CD4-positive, alpha-beta memory T cell (primary cell): ENCODE measurements at regions of chr13 and their contacts with region 1.

Region 1: DNA sequence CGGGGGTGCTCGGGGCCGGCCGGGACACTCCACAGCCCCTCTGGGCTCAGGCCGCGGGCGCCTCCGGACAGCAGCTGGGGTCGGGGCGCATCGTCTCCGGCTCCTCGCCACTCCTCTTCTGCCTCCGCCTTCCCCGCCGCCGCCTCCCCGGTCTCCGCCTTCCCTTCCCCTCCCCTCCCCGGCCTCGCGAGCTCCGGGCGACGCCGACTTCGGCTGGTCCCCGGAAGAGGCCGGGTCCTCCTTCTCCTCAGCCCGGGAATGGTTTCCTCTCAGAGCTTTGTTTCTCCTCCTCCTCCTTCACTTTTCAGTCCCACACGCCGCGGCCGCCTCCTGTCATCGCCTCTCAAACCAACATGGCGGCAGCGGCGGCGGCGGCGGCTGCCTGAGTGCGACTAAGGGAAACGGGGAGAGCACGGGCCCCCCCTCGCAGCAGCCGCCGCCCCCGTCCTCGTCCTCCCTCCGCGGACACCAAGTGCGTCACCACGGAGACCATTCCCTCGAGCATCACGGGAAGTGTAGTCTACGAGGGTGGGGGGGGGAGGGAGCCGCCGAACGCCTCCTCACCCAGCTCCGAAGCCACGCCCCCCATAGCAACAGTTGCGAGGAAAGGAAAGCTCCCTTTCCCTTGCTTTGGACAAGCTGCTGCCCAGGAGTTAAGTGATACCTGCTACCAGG is at the start of gene UBL3:
- DNase-seq: peak; percentile 91 to 96 (median 93)
- H3K4me3 ChIP-seq: peak within 1 kb of the TSS; percentile 85 to 93
- H3K4me3 Mint-ChIP-seq: peak within 1 kb of the TSS; percentile 93 to 99 (median 98)
- H3K27ac ChIP-seq: peak within 1 kb of the TSS; percentile 94
- H3K27ac Mint-ChIP-seq: peak within 1 kb of the TSS; percentile 97 to 100 (median 99)
- H3K4me1 ChIP-seq: peaks cover 28% of the 10 kb centered on the region
- H3K4me1 Mint-ChIP-seq: peaks cover 18 to 39% (median 24%) of the 10 kb centered on the region in 4 donors
- H3K27me3 ChIP-seq: no peaks in the 10 kb centered on the region
- H3K27me3 Mint-ChIP-seq: no peaks in the 10 kb centered on the region
- total RNA-seq, gene UBL3: 45.7 to 47.0 TPM

Region 2: GRCh38 chr13:29771247-29771646 is 79.1 kb before region 1 on chr13:
- CTCF ChIA-PET with region 1: interaction called, 7 read pairs
- POLR2A ChIA-PET with region 1: interaction called, 3 read pairs
- intact Hi-C with region 1: loop called (anchors 2 kb)
- DNase-seq: peak in 4 of 5 donors; percentile 49 to 54 (median 52)
- H3K4me3 ChIP-seq: no peak overlapping the region
- H3K4me3 Mint-ChIP-seq: no peak overlapping the region
- H3K27ac ChIP-seq: no peak overlapping the region
- H3K27ac Mint-ChIP-seq: no peak overlapping the region
- H3K4me1 ChIP-seq: no peaks in the 10 kb centered on the region
- H3K4me1 Mint-ChIP-seq: peaks cover 0 to 4% (median 3%) of the 10 kb centered on the region in 4 donors
- H3K27me3 ChIP-seq: no peaks in the 10 kb centered on the region
- H3K27me3 Mint-ChIP-seq: no peaks in the 10 kb centered on the region

Region 3: GRCh38 chr13:29782798-29783197 is 67.6 kb before region 1 on chr13:
- CTCF ChIA-PET with region 1: no interaction called
- POLR2A ChIA-PET with region 1: no interaction called
- intact Hi-C with region 1: no loop called
- DNase-seq: no peak
- H3K4me3 ChIP-seq: no peak overlapping the region
- H3K4me3 Mint-ChIP-seq: no peak overlapping the region
- H3K27ac ChIP-seq: no peak overlapping the region
- H3K27ac Mint-ChIP-seq: peak overlapping the region in 1 of 7 donors; percentile 31
- H3K4me1 ChIP-seq: peaks cover 7% of the 10 kb centered on the region
- H3K4me1 Mint-ChIP-seq: peaks cover 18 to 48% (median 37%) of the 10 kb centered on the region in 4 donors
- H3K27me3 ChIP-seq: no peaks in the 10 kb centered on the region
- H3K27me3 Mint-ChIP-seq: no peaks in the 10 kb centered on the region

Region 4: DNA sequence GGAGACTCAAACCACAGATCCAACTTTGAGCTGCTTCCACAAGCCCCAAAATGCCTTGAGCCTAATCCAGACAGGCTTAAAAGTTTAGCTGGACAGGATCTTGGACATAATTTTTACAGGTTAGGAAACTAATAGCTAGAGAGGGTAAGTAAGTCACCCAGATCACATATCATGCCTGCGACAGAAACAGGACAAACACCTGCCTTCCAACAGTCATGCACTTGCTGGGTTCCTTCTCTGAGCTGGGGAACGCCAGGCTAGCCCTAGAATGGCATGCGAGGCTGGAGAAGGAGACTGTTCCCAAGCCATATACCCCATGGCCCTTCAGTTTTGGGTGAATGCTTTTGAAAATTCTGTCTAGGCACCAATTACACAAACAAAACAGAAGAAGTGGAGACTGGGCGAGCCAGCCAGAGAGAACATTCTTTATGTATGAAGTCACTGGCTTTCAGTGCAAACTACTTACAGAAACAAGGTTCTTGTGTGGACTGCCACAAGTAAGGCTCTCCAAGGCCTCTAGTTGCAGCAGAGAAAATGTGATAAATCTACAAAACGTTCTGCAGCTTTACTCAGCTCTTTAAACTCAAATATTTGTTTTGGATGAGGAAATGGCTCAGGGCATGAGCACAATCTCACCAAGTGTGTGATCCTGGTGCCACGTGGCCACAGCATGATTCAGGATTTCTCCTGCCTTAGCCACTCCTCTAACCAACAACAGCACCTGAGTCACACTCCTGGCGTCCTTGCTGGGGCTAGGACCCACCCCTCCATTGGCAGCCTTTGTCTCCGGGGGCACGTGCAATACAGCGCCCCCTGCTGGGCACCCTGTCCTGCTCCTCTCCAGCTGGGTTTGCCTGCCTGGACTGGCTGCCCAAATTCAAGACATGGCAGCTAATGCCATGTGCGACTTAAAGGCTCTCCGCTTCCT is 73.5 kb after region 1 on chr13:
- CTCF ChIA-PET with region 1: interaction called, 87 read pairs
- POLR2A ChIA-PET with region 1: interaction called, 18 read pairs
- intact Hi-C with region 1: loop called (anchors 5 kb)
- DNase-seq: peak; percentile 16 to 64 (median 40)
- H3K4me3 ChIP-seq: no peak overlapping the region
- H3K4me3 Mint-ChIP-seq: peak overlapping the region in 2 of 8 donors; percentile 14 to 34
- H3K27ac ChIP-seq: no peak overlapping the region
- H3K27ac Mint-ChIP-seq: peak overlapping the region in 1 of 7 donors; percentile 53
- H3K4me1 ChIP-seq: peaks cover 17% of the 10 kb centered on the region
- H3K4me1 Mint-ChIP-seq: peaks cover 19 to 38% (median 28%) of the 10 kb centered on the region in 4 donors
- H3K27me3 ChIP-seq: no peaks in the 10 kb centered on the region
- H3K27me3 Mint-ChIP-seq: no peaks in the 10 kb centered on the region

Region 5: GRCh38 chr13:29954082-29955028 is 104.0 kb after region 1 on chr13:
- CTCF ChIA-PET with region 1: interaction called, 10 read pairs
- POLR2A ChIA-PET with region 1: interaction called, 37 read pairs
- intact Hi-C with region 1: no loop called
- DNase-seq: peak; percentile 46 to 81 (median 68)
- H3K4me3 ChIP-seq: peak overlapping the region; percentile 35 to 47
- H3K4me3 Mint-ChIP-seq: peak overlapping the region; percentile 80 to 98 (median 88)
- H3K27ac ChIP-seq: peak overlapping the region; percentile 49
- H3K27ac Mint-ChIP-seq: peak overlapping the region; percentile 77 to 96 (median 90)
- H3K4me1 ChIP-seq: peaks cover 53% of the 10 kb centered on the region
- H3K4me1 Mint-ChIP-seq: peaks cover 29 to 58% (median 44%) of the 10 kb centered on the region in 4 donors
- H3K27me3 ChIP-seq: no peaks in the 10 kb centered on the region
- H3K27me3 Mint-ChIP-seq: no peaks in the 10 kb centered on the region

Region 6: GRCh38 chr13:30148171-30148754 is 297.9 kb after region 1 on chr13:
- CTCF ChIA-PET with region 1: interaction called, 4 read pairs
- POLR2A ChIA-PET with region 1: interaction called, 15 read pairs
- intact Hi-C with region 1: no loop called
- DNase-seq: peak; percentile 73 to 81 (median 80)
- H3K4me3 ChIP-seq: peak overlapping the region in 1 of 2 donors; percentile 31
- H3K4me3 Mint-ChIP-seq: peak overlapping the region in 7 of 8 donors; percentile 70 to 88 (median 75)
- H3K27ac ChIP-seq: peak overlapping the region; percentile 60
- H3K27ac Mint-ChIP-seq: peak overlapping the region; percentile 90 to 97 (median 93)
- H3K4me1 ChIP-seq: peaks cover 99% of the 10 kb centered on the region
- H3K4me1 Mint-ChIP-seq: peaks cover 79 to 100% (median 93%) of the 10 kb centered on the region in 4 donors
- H3K27me3 ChIP-seq: no peaks in the 10 kb centered on the region
- H3K27me3 Mint-ChIP-seq: no peaks in the 10 kb centered on the region

Region 7: GRCh38 chr13:31161828-31162590 is 1311.6 kb after region 1 on chr13 and contains the start of gene HSPH1:
- CTCF ChIA-PET with region 1: no interaction called
- POLR2A ChIA-PET with region 1: no interaction called
- intact Hi-C with region 1: loop called (anchors 5 kb)
- DNase-seq: peak; percentile 99 to 100 (median 100)
- H3K4me3 ChIP-seq: peak within 1 kb of the TSS; percentile 79 to 96
- H3K4me3 Mint-ChIP-seq: peak within 1 kb of the TSS; percentile 96 to 99 (median 98)
- H3K27ac ChIP-seq: peak within 1 kb of the TSS; percentile 95
- H3K27ac Mint-ChIP-seq: peak within 1 kb of the TSS; percentile 97 to 100 (median 99)
- H3K4me1 ChIP-seq: peaks cover 37% of the 10 kb centered on the region
- H3K4me1 Mint-ChIP-seq: peaks cover 23 to 54% (median 29%) of the 10 kb centered on the region in 4 donors
- H3K27me3 ChIP-seq: no peaks in the 10 kb centered on the region
- H3K27me3 Mint-ChIP-seq: no peaks in the 10 kb centered on the region
- total RNA-seq, gene HSPH1: 68.6 to 75.5 TPM